ENCODE measurements at regions of chr16 and their contacts with region 1.

Region 1: DNA sequence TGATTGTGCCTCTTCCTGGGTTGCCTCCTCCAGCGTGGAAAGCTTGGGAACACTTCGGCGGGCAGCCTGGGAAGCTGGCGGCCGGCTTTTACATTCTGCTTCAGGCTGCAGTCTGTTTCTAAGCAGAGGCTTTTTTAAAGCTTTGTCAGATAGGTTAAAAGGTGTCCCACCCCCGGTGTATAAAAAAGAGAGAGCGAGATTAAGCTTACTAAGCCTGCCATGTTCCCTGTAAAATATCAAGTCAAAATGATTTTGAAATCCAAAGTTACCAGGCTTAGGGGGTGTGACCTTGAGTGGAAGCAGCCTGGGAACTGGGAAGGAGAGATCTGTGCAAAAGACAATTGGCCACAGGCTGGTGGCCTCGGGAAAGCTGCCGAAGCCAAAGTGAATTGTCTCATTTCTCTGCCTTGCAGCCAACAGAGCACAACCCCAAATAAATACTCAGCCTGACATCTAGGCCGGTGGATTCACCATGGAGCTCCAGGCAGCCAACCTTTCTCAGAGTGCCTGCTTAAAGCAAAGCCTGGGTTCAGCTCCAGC is 254.5 kb downstream of the FTO start:
- DNase-seq: no peak
- H3K4me3 ChIP-seq: no peak overlapping the region
- H3K27ac ChIP-seq: no peak overlapping the region
- H3K4me1 ChIP-seq: peaks cover 0 to 17% of the 10 kb centered on the region in 2 experiments; a peak in 2 of 4 replicates
- H3K27me3 ChIP-seq: no peaks in the 10 kb centered on the region
- CTCF ChIP-seq: no peak
- EP300 ChIP-seq: no peak
- RAD21 ChIP-seq: no peak

Region 2: GRCh38 chr16:53945996-53946395 is 12.4 kb before region 1 on chr16:
- CTCF ChIA-PET with region 1: interaction called, 20 read pairs
- POLR2A ChIA-PET with region 1: no interaction called
- DNase-seq: peak; percentile 22
- H3K4me3 ChIP-seq: no peak overlapping the region
- H3K27ac ChIP-seq: no peak overlapping the region
- H3K4me1 ChIP-seq: peaks cover 0 to 14% of the 10 kb centered on the region in 2 experiments; a peak in 2 of 4 replicates
- H3K27me3 ChIP-seq: no peaks in the 10 kb centered on the region
- CTCF ChIP-seq: peak; percentile 80
- EP300 ChIP-seq: no peak
- RAD21 ChIP-seq: peak; percentile 88